ENCODE measurements at regions of chr13 and their contacts with region 1.

Region 1: GRCh38 chr13:100573121-100573520 is 15.5 kb downstream of the GGACT start:
- DNase-seq: peak; percentile 48
- H3K4me3 ChIP-seq: no peak overlapping the region
- H3K27ac ChIP-seq: no peak overlapping the region
- H3K27me3 ChIP-seq: no peaks in the 10 kb centered on the region
- CTCF ChIP-seq: peak; percentile 79

Region 2: DNA sequence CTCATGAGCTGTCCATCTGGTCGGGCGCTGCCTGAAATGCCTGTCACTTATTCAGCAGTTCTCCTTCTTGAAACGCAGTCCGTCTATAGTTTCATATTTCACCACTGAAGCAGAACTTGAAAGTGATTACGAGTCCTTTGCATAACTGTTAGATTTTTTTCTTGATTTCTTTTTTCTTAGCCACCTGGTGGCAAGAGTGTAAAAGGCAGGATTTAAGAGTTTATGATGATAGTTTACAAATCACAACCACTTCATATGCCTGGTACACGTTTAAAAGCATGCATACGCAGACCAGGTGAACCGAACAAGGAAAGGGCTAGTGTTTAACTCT is 30.3 kb before region 1 on chr13:
- CTCF ChIA-PET with region 1: interaction called, 10 read pairs
- POLR2A ChIA-PET with region 1: no interaction called
- DNase-seq: no peak
- H3K4me3 ChIP-seq: no peak overlapping the region
- H3K27ac ChIP-seq: no peak overlapping the region
- H3K27me3 ChIP-seq: no peaks in the 10 kb centered on the region
- CTCF ChIP-seq: peak; percentile 70

Region 3: GRCh38 chr13:100560498-100561157 is 12.5 kb before region 1 on chr13:
- CTCF ChIA-PET with region 1: interaction called, 18 read pairs
- POLR2A ChIA-PET with region 1: no interaction called
- DNase-seq: no peak
- H3K4me3 ChIP-seq: no peak overlapping the region
- H3K27ac ChIP-seq: peak overlapping the region; percentile 11
- H3K27me3 ChIP-seq: no peaks in the 10 kb centered on the region
- CTCF ChIP-seq: no peak

Region 4: GRCh38 chr13:100588331-100589177 is 15.4 kb after region 1 on chr13 and contains the start of gene GGACT:
- CTCF ChIA-PET with region 1: interaction called, 27 read pairs
- POLR2A ChIA-PET with region 1: no interaction called
- DNase-seq: no peak
- H3K4me3 ChIP-seq: peak within 1 kb of the TSS; percentile 67
- H3K27ac ChIP-seq: no peak within 1 kb of the TSS
- H3K27me3 ChIP-seq: no peaks in the 10 kb centered on the region
- CTCF ChIP-seq: peak; percentile 46
- polyA plus RNA-seq, gene GGACT: 6.2 and 7.6 TPM in 2 replicates